ENCODE measurements at regions of chr3 and their contacts with region 1.

Region 1: GRCh38 chr3:187679638-187680396 is 9.6 kb upstream of the SST start:
- DNase-seq: peak; percentile 32 to 75 (median 63)
- ATAC-seq: peak; percentile 54
- H3K4me3 ChIP-seq: no peak overlapping the region
- H3K4me3 Mint-ChIP-seq: no peak overlapping the region
- H3K27ac ChIP-seq: no peak overlapping the region
- H3K27ac Mint-ChIP-seq: no peak overlapping the region
- H3K4me1 ChIP-seq: no peaks in the 10 kb centered on the region
- H3K4me1 Mint-ChIP-seq: no peaks in the 10 kb centered on the region
- H3K27me3 ChIP-seq: no peaks in the 10 kb centered on the region
- H3K27me3 Mint-ChIP-seq: peaks cover 40% of the 10 kb centered on the region
- CTCF ChIP-seq: peak; percentile 94

Region 2: DNA sequence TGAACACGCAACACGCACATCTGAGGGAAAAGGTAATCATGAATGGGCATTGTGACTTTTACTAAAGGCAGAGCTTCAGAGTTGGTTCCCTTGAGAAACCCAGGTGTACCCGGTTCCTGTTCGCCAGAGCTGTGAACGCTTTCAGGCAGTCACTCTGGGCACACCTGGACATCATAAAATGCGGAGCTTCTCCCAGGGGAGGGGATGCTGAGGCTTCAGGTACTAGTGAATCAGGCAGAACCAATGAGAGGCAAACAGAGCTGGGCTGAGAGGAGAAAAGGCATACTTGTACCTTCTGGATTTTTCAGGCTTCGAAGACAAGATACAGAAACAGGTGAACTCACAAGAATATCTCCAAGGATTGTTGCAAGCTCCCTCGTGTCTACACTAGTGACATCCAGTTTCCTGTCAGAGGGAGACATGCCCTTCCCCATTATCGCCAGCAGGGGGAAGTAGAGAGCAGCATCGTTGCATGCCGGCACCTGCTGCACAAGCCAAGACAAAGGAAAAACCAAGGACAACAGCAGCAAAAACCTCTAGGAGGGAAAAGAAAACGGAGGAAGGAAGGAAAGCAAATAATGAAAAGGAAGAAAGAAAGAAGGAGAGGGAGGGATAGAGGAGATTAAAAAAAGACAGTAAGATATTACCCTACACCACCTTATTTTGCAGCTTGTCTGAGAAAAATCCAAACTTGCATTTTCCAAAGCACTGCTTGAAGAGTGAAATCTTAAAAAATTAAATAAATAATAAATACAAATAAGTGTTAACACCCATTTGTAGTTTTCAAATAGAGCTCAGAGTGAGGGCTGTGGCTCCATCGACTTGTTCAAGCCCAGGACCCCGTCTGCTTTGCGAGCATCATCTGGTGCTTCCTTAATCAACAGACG is 1065.0 kb before region 1 on chr3:
- CTCF ChIA-PET with region 1: no interaction called
- POLR2A ChIA-PET with region 1: no interaction called
- intact Hi-C with region 1: no loop called
- DNase-seq: peak; percentile 39 to 85 (median 73)
- ATAC-seq: peak; percentile 61
- H3K4me3 ChIP-seq: peak overlapping the region; percentile 3 to 21
- H3K4me3 Mint-ChIP-seq: peak overlapping the region; percentile 46
- H3K27ac ChIP-seq: no peak overlapping the region
- H3K27ac Mint-ChIP-seq: no peak overlapping the region
- H3K4me1 ChIP-seq: peaks cover 17% of the 10 kb centered on the region
- H3K4me1 Mint-ChIP-seq: peaks cover 22% of the 10 kb centered on the region
- H3K27me3 ChIP-seq: peaks cover 0 to 10% of the 10 kb centered on the region in 2 experiments
- H3K27me3 Mint-ChIP-seq: peaks cover 27% of the 10 kb centered on the region
- CTCF ChIP-seq: peak; percentile 98

Region 3: DNA sequence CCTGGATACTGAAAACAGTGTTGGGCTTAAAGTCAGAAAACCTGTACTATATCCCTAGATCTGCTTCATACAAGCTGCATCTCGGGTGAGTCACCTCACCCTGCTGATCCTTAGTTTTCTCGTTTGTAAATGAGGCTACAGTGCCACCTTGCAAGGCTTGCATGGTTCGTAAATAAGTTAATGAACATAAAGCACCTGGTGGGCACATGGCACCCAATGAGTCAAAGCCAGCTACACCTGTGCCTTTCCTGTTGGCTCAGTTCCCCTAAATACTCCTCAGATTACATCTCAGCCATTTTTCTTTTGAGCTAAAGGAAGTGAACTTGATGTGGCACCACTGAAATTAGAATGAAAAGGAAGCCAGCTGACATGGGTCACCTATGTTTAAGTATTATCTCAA is 456.0 kb before region 1 on chr3:
- CTCF ChIA-PET with region 1: interaction called, 4 read pairs
- POLR2A ChIA-PET with region 1: no interaction called
- intact Hi-C with region 1: loop called (anchors 1 to 2 kb)
- DNase-seq: no peak
- ATAC-seq: no peak
- H3K4me3 ChIP-seq: no peak overlapping the region
- H3K4me3 Mint-ChIP-seq: no peak overlapping the region
- H3K27ac ChIP-seq: no peak overlapping the region
- H3K27ac Mint-ChIP-seq: no peak overlapping the region
- H3K4me1 ChIP-seq: no peaks in the 10 kb centered on the region
- H3K4me1 Mint-ChIP-seq: no peaks in the 10 kb centered on the region
- H3K27me3 ChIP-seq: peaks cover 0 to 2% of the 10 kb centered on the region in 2 experiments
- H3K27me3 Mint-ChIP-seq: peaks cover 11% of the 10 kb centered on the region
- CTCF ChIP-seq: no peak

Region 4: GRCh38 chr3:187565701-187566100 is 114.1 kb before region 1 on chr3:
- CTCF ChIA-PET with region 1: no interaction called
- POLR2A ChIA-PET with region 1: no interaction called
- intact Hi-C with region 1: no loop called
- DNase-seq: no peak
- ATAC-seq: no peak
- H3K4me3 ChIP-seq: no peak overlapping the region
- H3K4me3 Mint-ChIP-seq: no peak overlapping the region
- H3K27ac ChIP-seq: no peak overlapping the region
- H3K27ac Mint-ChIP-seq: no peak overlapping the region
- H3K4me1 ChIP-seq: no peaks in the 10 kb centered on the region
- H3K4me1 Mint-ChIP-seq: no peaks in the 10 kb centered on the region
- H3K27me3 ChIP-seq: no peaks in the 10 kb centered on the region
- H3K27me3 Mint-ChIP-seq: peaks cover 22% of the 10 kb centered on the region
- CTCF ChIP-seq: no peak

Region 5: DNA sequence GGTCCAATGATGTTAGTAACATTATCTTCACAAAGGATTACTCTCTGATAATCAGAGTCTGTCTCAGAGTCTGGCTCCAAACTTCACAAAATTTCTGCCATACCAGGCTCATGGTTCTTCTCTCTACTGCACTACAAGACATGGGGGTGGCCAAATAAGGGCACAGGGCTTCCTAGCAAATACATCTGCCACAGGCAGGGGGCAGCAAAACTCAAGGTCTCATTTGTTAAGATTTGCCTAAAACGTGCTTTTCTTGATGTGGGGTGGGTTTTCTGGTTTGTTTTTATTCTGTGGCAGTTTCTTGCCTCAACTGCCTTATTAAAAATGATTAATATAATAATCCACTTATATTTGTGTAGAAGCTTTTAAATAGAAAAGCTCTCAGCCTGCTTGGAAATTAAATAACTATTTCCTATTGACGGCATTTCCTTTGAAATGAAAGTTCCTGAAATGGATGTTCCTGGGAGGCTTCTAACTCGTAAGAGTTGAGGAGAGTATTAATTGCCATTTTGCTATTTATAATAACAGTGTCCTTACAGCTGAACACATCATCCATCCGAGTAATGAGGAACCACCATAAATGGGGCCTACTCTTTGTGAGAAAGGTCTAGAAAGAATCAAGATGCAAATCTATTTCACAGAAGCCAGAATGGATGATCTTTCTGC is 63.4 kb before region 1 on chr3:
- CTCF ChIA-PET with region 1: interaction called, 10 read pairs
- POLR2A ChIA-PET with region 1: no interaction called
- intact Hi-C with region 1: loop called in 1 of 2 experiments (anchors 2 kb)
- DNase-seq: peak; percentile 7 to 64 (median 44)
- ATAC-seq: peak; percentile 58
- H3K4me3 ChIP-seq: no peak overlapping the region
- H3K4me3 Mint-ChIP-seq: no peak overlapping the region
- H3K27ac ChIP-seq: no peak overlapping the region
- H3K27ac Mint-ChIP-seq: no peak overlapping the region
- H3K4me1 ChIP-seq: peaks cover 9% of the 10 kb centered on the region
- H3K4me1 Mint-ChIP-seq: peaks cover 8% of the 10 kb centered on the region
- H3K27me3 ChIP-seq: no peaks in the 10 kb centered on the region
- H3K27me3 Mint-ChIP-seq: peaks cover 7% of the 10 kb centered on the region
- CTCF ChIP-seq: peak; percentile 70

Region 6: GRCh38 chr3:187689984-187690383 is 10.2 kb after region 1 on chr3:
- CTCF ChIA-PET with region 1: interaction called, 17 read pairs
- POLR2A ChIA-PET with region 1: no interaction called
- intact Hi-C with region 1: no loop called
- DNase-seq: no peak
- ATAC-seq: no peak
- H3K4me3 ChIP-seq: no peak overlapping the region
- H3K4me3 Mint-ChIP-seq: no peak overlapping the region
- H3K27ac ChIP-seq: no peak overlapping the region
- H3K27ac Mint-ChIP-seq: no peak overlapping the region
- H3K4me1 ChIP-seq: no peaks in the 10 kb centered on the region
- H3K4me1 Mint-ChIP-seq: no peaks in the 10 kb centered on the region
- H3K27me3 ChIP-seq: no peaks in the 10 kb centered on the region
- H3K27me3 Mint-ChIP-seq: peaks cover 34% of the 10 kb centered on the region
- CTCF ChIP-seq: no peak

Region 7: GRCh38 chr3:187719628-187720336 is 40.0 kb after region 1 on chr3:
- CTCF ChIA-PET with region 1: interaction called, 20 read pairs
- POLR2A ChIA-PET with region 1: no interaction called
- intact Hi-C with region 1: loop called (anchors 1 kb)
- DNase-seq: no peak
- ATAC-seq: no peak
- H3K4me3 ChIP-seq: no peak overlapping the region
- H3K4me3 Mint-ChIP-seq: no peak overlapping the region
- H3K27ac ChIP-seq: no peak overlapping the region
- H3K27ac Mint-ChIP-seq: no peak overlapping the region
- H3K4me1 ChIP-seq: no peaks in the 10 kb centered on the region
- H3K4me1 Mint-ChIP-seq: no peaks in the 10 kb centered on the region
- H3K27me3 ChIP-seq: no peaks in the 10 kb centered on the region
- H3K27me3 Mint-ChIP-seq: no peaks in the 10 kb centered on the region
- CTCF ChIP-seq: no peak